Activated B cell treated with CpG ODN at 0.5 μM for 24 hours (primary cell): ENCODE measurements at regions of chr15 and their contacts with region 1.

Region 1: DNA sequence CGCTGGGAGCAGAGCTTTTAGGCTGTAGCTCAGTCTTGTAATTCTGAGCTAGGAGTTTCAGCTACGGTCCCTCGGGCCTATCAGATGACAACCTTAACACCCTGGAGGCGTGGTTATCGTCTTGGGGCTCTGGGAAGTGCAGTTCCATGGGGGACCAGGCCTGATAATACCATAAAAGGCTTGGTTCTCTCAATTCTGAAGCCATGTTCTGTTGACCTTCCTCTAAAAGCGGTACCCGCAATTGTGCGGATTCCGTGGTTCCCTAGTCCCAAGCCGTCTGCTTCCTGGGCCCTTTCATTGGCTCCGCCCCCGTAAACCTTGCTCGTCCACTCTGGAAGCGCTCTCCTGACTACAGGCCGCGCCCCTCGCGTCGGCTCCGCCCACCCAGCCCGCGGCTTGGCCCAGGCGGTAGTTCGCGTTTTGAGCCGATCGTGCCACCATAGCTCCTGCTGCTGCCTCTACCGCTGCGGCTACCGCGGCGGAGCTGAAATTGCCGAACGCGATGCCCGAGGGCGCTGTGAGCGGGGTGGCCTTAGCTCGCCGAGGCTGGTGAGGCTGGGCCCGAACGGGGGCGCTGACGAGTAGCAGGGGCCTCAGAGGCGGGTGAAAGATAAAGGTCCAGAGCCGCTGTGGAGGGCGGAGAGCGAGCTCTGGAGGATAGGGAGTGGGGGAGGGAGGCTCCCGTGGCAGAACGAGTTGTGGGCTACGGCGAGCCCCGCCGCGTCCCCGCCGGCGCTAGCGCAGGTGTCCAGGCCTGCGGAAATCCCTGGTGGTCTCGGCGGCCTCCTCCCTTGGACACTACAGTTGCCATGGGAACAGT is at the start of gene MAPKBP1:
- DNase-seq: peak; percentile 98
- ATAC-seq: peak; percentile 92
- H3K4me3 Mint-ChIP-seq: peak within 1 kb of the TSS; percentile 93
- H3K27ac Mint-ChIP-seq: peak within 1 kb of the TSS; percentile 94
- H3K4me1 Mint-ChIP-seq: peaks cover 56% of the 10 kb centered on the region
- H3K27me3 Mint-ChIP-seq: no peaks in the 10 kb centered on the region
- CTCF ChIP-seq: no peak
- total RNA-seq, gene MAPKBP1: 31.3 and 42.3 TPM in 2 replicates

Region 2: DNA sequence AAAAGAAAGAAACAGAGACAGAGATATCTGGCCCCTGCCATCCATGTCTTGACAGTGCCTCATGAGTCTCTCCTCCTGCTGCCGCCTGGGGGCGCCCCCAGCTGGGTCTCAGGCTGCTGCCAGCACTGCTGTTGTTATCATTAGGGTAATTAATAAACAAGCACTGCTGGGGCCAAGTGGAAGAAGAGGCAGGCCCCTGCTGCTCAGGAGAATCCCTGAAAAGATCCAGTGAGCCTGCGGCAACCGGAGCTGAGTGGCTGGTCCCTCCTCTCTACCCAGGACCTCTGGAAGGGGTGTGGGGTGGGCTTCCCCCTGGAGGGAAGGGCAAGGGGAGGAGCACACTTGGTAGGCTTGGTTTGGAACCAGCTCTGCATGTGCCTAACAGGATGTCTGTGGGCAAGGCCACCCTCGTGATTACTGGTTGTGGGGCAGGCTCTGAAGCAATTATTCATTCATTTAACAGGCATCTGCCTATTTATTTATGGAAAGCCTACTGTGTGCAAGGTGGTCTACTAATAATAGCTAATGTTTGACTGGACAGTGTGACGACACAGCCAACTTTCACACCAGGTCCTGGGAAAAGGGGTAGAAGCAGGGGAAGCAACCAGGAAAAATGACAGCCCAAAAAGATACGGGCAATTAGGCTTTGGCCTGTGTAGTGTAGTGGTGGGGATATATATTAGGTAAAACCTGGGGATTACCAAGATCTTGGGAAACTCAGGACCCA is 216.4 kb before region 1 on chr15:
- CTCF ChIA-PET with region 1: no interaction called
- POLR2A ChIA-PET with region 1: no interaction called
- intact Hi-C with region 1: loop called (anchors 2 kb)
- DNase-seq: peak; percentile 39
- ATAC-seq: peak; percentile 73
- H3K4me3 Mint-ChIP-seq: peak overlapping the region; percentile 90
- H3K27ac Mint-ChIP-seq: peak overlapping the region; percentile 59
- H3K4me1 Mint-ChIP-seq: peaks cover 26% of the 10 kb centered on the region
- H3K27me3 Mint-ChIP-seq: peaks cover 40% of the 10 kb centered on the region
- CTCF ChIP-seq: no peak

Region 3: DNA sequence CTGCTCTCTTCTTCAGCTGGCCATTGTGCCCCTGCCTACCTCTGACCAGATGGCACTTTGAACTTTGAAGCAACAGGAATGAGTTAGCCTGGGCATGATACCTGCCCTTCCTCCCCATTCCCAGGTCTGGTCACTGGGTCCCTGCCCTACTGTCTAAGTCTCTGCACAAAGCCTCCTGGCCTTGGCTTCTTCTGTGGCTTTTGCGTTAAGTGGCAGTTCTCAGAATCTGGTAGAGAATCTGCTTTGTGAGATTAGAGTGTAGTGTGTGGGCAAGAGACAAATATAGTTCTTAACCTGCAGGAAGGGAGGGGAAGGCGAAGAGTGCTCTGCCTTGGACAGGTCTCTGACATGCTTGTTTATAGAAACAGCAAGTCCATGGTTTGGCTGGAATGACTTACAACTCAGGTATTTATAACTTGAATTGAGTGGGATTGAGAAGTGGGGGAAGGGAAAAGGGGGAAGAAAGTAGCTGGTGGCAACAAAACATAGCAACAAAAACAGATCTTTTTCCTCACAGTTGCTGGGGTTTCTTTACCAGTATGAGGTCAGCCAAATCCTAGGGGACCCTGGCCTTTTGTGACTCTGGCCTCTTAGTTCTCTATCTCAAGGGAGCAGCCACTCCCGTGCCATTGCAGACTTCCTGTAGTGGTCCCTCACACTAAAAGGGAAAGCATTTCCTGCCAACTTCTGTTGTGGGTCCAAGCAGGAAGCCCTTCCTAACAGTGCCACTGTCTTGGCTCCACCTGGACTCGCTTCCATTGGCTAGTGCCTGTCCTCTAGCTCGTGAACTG is 16.7 kb after region 1 on chr15:
- CTCF ChIA-PET with region 1: interaction called, 19 read pairs
- POLR2A ChIA-PET with region 1: interaction called, 13 read pairs
- intact Hi-C with region 1: loop called (anchors 1 kb)
- DNase-seq: no peak
- ATAC-seq: no peak
- H3K4me3 Mint-ChIP-seq: no peak overlapping the region
- H3K27ac Mint-ChIP-seq: no peak overlapping the region
- H3K4me1 Mint-ChIP-seq: peaks cover 57% of the 10 kb centered on the region
- H3K27me3 Mint-ChIP-seq: no peaks in the 10 kb centered on the region
- CTCF ChIP-seq: no peak

Region 4: GRCh38 chr15:41827880-41828806 is 53.9 kb after region 1 on chr15 and contains the start of gene JMJD7:
- CTCF ChIA-PET with region 1: interaction called, 6 read pairs
- POLR2A ChIA-PET with region 1: no interaction called
- intact Hi-C with region 1: loop called (anchors 1 kb)
- DNase-seq: peak; percentile 93
- ATAC-seq: peak; percentile 98
- H3K4me3 Mint-ChIP-seq: peak within 1 kb of the TSS; percentile 91
- H3K27ac Mint-ChIP-seq: peak within 1 kb of the TSS; percentile 73
- H3K4me1 Mint-ChIP-seq: peaks cover 21% of the 10 kb centered on the region
- H3K27me3 Mint-ChIP-seq: no peaks in the 10 kb centered on the region
- CTCF ChIP-seq: no peak
- total RNA-seq, gene JMJD7: 12.1 and 16.5 TPM in 2 replicates

Region 5: GRCh38 chr15:41930221-41930866 is 156.1 kb after region 1 on chr15:
- CTCF ChIA-PET with region 1: interaction called, 7 read pairs
- POLR2A ChIA-PET with region 1: interaction called, 7 read pairs
- intact Hi-C with region 1: loop called (anchors 1 kb)
- DNase-seq: no peak
- ATAC-seq: no peak
- H3K4me3 Mint-ChIP-seq: peak overlapping the region; percentile 65
- H3K27ac Mint-ChIP-seq: peak overlapping the region; percentile 88
- H3K4me1 Mint-ChIP-seq: peaks cover 86% of the 10 kb centered on the region
- H3K27me3 Mint-ChIP-seq: no peaks in the 10 kb centered on the region
- CTCF ChIP-seq: no peak

Region 6: DNA sequence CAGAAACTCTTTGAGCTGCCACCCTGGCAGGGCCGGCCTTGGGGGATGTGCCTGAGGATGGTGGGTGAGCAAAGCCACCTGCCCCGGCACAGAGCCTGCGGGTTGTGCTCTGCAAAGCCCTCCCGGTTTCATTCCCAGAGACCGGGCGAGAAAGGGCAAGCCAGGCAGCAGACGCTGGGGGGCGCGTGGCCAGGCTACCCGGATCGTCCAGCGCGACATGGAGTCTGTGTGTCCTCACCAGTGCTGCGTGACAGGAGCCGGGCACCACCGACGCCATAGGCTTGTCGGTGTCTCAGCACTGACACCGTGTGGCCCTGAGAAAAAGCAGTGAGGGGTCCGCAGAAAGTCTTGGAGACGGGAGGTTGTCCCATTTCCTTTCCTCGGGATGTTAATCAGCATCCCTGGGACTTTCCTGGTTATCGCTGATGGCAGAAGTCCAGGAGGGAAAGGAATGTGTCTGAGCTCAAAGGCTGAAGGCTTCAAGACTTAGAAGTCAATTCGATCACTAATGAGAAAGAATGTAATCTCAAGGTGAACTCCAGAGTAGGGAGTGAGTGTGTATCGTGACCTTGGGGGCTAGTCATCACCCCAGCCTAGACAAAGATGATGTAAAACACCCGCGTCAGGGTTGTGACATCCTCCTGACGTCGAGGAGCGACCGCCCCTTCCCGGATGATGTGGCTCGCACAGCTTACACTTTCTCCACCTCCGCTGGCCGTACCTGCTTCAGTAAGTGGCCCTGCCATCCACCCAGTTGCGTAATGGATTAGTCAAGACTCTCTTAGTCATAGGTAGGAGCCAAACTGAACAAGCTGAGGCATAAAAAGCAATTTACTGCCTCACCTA is 282.9 kb after region 1 on chr15:
- CTCF ChIA-PET with region 1: interaction called, 6 read pairs
- POLR2A ChIA-PET with region 1: interaction called, 4 read pairs
- intact Hi-C with region 1: loop called (anchors 1 kb)
- DNase-seq: no peak
- ATAC-seq: peak; percentile 80
- H3K4me3 Mint-ChIP-seq: peak overlapping the region; percentile 45
- H3K27ac Mint-ChIP-seq: no peak overlapping the region
- H3K4me1 Mint-ChIP-seq: peaks cover 13% of the 10 kb centered on the region
- H3K27me3 Mint-ChIP-seq: peaks cover 32% of the 10 kb centered on the region
- CTCF ChIP-seq: no peak